Cardiac septum (tissue), 1 donor: ENCODE measurements at regions of chr19 and their contacts with region 1.

Region 1: GRCh38 chr19:56748378-56748777 is 76.8 kb upstream of the ZNF835 start:
- DNase-seq: no peak

Region 2: GRCh38 chr19:56562766-56563165 is 185.6 kb before region 1 on chr19:
- intact Hi-C with region 1: no loop called
- DNase-seq: no peak

Region 3: GRCh38 chr19:56838909-56839651 is 90.7 kb after region 1 on chr19:
- intact Hi-C with region 1: loop called (anchors 5 kb)
- DNase-seq: peak; percentile 95

Region 4: DNA sequence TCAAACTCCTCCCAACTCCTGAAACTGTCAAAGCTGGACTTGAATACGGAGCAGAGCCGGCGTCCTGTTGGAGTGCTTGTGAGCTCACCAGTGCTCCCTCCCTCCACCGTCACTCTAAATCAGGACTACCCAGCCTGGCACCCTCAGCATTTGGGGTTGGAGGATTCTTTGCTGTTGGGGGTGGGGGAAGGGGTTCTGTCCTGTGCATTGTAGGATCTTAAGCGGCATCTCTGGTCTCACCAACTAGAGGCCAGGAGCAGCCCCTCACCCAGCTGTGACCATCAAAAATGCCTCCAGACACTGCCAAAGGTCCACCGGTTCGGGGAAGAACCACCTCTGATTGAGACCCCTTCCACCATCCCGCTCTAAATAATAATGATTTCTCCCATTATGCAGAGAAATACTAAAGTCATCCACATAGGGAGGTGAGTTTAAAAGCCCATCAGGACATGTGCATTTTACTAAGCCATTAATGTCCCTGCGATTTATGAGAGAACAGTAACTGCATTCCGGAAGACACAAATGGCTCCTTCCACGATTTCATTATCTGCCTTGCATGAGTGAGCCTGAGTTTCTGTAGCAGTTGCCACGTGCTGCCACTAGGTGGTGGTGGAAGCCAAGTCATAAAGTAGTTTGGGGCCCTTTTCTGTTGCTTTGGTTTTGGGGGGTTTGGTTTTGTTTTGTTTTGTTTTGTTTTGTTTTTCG is 355.3 kb after region 1 on chr19:
- intact Hi-C with region 1: loop called (anchors 5 kb)
- DNase-seq: no peak